ENCODE measurements at regions of chr3 and their contacts with region 1.

Region 1: DNA sequence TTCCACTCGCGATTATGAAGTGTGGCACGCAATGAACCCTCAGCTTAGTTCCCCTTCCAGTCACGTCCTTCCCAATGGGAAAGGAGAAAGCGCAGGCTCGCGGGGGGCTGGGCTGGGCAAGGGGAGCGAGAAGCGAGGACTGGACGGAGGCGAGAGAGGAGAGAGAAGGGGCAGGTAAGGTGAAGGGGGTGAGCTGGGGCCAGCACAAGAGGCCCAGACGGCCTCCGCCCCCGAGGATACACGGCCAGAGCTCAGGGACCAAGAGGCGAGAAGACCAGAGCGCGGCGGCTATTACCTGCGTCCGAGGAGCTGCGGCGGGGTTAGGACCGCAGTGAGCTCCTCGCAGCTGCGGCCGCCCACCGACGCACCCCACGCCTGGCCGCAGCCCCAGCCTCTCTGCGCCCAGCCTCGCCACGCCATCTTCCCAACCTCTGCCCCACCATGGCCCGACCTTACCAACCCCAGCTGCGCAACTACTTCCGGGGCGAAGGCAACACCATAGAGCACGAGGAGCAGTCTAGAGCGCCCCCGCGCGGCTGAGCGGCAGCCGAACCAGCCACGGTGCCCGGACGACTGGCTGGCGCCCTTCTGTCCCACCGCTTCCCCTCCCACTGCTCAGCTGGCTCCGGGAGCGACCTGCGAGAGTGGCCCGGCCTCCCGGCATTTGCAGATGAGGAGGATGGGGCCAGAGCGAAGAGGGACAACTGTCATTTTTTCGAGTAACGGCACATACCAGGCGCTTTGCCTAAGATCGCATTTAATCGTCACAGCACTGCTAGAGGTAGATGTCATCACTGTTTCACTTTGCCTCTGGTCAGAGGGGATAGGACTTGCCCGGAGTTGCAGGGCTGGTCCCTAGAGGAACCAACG is at the start of gene PARL:
- DNase-seq: peak; percentile 93
- H3K4me3 Mint-ChIP-seq: peak within 1 kb of the TSS; percentile 98
- H3K27ac Mint-ChIP-seq: peak within 1 kb of the TSS; percentile 95
- H3K4me1 Mint-ChIP-seq: peaks cover 25% of the 10 kb centered on the region
- H3K27me3 Mint-ChIP-seq: peaks cover 3% of the 10 kb centered on the region
- total RNA-seq, gene PARL: 74.9 and 81.7 TPM in 2 replicates

Region 2: DNA sequence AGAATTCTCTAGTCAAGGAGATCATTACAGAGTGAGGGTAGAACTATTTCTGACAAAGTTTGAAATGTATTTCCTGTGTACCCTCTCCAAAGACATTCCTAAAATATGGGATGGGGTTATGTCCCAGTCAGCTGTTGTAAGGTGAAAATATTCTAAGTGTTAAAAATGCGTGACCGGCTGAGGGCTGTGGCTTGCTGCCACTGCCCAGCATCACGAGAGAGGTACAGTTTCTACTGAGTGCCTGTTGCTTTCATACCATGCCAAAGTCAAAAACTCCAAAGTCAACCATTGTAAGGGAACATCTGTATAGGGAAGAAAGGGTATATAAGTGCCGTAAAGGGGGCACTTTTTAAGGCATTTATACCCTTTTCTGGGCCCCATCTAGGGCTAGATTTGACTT is 90.2 kb before region 1 on chr3:
- intact Hi-C with region 1: no loop called
- DNase-seq: no peak
- H3K4me3 Mint-ChIP-seq: no peak overlapping the region
- H3K27ac Mint-ChIP-seq: no peak overlapping the region
- H3K4me1 Mint-ChIP-seq: peaks cover 4% of the 10 kb centered on the region
- H3K27me3 Mint-ChIP-seq: no peaks in the 10 kb centered on the region

Region 3: DNA sequence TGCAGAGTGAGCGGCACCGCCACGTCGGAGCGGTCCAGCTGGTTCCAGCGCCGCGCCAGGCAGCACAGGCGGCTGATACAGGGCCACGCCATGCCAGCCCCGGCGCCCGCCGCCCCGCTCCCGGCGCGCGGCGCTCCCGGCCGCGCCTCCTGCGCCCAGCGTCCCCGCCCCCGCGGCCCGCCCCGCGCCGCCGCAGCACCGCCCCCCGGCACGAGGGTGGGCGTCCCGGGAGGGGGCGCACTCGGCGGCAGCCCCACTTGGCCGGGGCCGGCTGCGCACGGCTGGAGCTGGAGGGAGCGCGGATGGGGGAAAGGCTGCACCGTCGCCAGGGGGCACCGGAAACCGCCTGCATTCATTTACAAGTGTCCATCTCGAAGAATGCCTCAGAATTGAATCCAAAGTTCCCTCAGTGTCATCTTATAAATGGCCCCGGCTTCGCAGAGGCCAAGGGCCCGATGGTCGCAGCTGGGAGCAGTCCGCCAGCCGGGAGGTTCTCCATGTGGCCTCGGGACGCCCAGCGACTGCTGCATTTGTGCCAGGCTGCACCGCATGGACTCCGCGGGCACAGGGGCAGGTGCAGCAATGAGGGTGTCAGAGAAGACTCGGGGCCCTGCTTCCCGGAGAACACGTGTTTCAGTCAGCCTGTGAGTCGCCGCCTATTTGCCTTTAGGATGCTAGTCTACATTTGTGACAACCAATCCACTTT is 59.1 kb before region 1 on chr3 and contains the start of gene MAP6D1:
- intact Hi-C with region 1: loop called (anchors 2 kb)
- DNase-seq: peak; percentile 16
- H3K4me3 Mint-ChIP-seq: peak within 1 kb of the TSS; percentile 78
- H3K27ac Mint-ChIP-seq: no peak within 1 kb of the TSS
- H3K4me1 Mint-ChIP-seq: peaks cover 10% of the 10 kb centered on the region
- H3K27me3 Mint-ChIP-seq: peaks cover 11% of the 10 kb centered on the region
- total RNA-seq, gene MAP6D1: 1.1 and 2.9 TPM in 2 replicates

Region 4: DNA sequence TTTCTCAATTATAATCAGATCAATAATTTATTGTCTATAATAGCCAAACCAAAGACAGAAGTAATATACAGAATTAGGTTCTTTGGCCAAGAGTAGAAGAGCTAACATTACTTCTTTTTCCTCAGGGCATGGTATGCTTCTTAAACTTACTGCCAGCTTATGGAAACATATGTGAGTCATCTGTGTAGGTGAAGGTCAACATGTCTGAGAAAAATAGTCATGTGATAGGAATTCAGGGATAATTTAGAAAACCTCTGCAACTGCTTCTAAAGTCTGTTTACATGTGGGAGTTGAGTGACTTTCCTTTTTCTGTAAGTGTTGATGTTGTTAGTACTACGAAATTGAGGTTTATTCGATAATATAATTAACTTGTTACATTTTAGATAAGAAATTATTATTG is 40.1 kb before region 1 on chr3:
- intact Hi-C with region 1: loop called (anchors 1 kb)
- DNase-seq: no peak
- H3K4me3 Mint-ChIP-seq: no peak overlapping the region
- H3K27ac Mint-ChIP-seq: peak overlapping the region; percentile 59
- H3K4me1 Mint-ChIP-seq: peaks cover 11% of the 10 kb centered on the region
- H3K27me3 Mint-ChIP-seq: no peaks in the 10 kb centered on the region

Region 5: GRCh38 chr3:183944775-183945174 is 60.1 kb after region 1 on chr3:
- intact Hi-C with region 1: no loop called
- DNase-seq: no peak
- H3K4me3 Mint-ChIP-seq: no peak overlapping the region
- H3K27ac Mint-ChIP-seq: no peak overlapping the region
- H3K4me1 Mint-ChIP-seq: no peaks in the 10 kb centered on the region
- H3K27me3 Mint-ChIP-seq: no peaks in the 10 kb centered on the region

Region 6: DNA sequence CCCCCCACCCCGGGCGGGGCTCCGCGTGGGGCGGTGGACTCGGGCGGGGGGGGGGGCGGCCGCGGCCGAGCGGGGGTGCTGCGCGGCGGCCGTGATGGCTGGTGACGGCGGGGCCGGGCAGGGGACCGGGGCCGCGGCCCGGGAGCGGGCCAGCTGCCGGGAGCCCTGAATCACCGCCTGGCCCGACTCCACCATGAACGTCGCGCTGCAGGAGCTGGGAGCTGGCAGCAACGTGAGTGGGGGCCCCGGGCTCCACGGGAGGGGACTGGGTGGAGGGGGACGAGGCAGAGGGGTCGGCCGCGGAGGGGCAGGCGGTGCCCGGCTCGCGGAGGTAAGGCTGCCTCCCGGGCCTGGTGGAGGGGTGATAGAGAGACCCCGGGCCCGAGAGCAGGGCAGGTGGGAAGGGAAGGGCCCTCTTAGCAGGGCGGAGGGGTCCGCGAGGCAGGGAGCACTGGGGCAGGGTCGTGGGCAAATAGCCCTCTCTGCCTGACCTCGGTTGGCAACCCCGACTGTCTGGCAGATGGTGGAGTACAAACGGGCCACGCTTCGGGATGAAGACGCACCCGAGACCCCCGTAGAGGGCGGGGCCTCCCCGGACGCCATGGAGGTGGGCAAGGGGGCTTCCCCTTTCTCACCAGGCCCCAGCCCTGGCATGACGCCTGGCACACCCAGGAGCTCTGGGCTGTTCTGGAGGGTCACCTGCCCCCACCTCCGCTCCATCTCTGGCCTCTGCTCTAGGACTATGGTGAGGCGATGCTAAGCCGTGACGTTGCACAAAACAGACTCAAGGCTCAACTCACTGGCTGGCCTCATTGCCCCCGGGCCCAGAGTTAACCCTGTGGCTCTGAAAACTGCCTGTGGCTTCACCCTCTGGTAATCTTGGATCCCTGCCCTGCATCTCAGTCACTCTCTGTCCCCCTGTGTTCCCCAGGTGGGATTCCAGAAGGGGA is 391.6 kb after region 1 on chr3 and contains the start of gene ECE2:
- intact Hi-C with region 1: no loop called
- DNase-seq: no peak
- H3K4me3 Mint-ChIP-seq: no peak within 1 kb of the TSS
- H3K27ac Mint-ChIP-seq: no peak within 1 kb of the TSS
- H3K4me1 Mint-ChIP-seq: no peaks in the 10 kb centered on the region
- H3K27me3 Mint-ChIP-seq: peaks cover 48% of the 10 kb centered on the region
- total RNA-seq, gene ECE2: not detected in 2 replicates